Aorta (tissue), 5 donors: ENCODE measurements at regions of chr14 and their contacts with region 1.

Region 1: DNA sequence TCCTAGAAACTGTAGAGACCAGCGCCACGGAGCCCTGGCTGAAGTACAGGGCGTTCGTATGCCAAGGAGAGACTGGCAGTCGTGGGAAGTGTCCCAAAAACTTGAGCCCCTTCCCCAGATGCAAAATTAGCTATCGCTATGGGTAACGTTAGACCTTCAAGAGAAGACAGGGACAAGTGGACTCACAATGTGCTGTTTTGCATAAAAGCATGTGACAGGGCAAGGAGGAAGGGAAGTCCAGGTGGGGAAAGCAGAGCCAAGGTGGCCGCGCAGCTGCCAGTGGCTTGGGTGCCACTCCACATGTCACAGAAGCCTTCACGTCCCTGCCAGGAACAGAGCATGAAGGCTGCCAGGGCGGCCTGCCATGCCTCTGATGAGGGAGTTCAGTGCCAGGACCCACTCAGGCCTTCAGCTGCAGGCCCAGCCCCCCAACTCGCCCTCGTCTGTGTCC is 61.2 kb upstream of the DYNC1H1 start:
- DNase-seq: no peak
- ATAC-seq: no peak
- H3K4me3 ChIP-seq: no peak overlapping the region
- H3K27ac ChIP-seq: no peak overlapping the region
- H3K4me1 ChIP-seq: no peaks in the 10 kb centered on the region
- H3K27me3 ChIP-seq: no peaks in the 10 kb centered on the region

Region 2: GRCh38 chr14:101774006-101774795 is 128.9 kb before region 1 on chr14:
- intact Hi-C with region 1: loop called in 1 of 2 experiments (anchors 10 kb)
- DNase-seq: no peak
- ATAC-seq: no peak
- H3K4me3 ChIP-seq: no peak overlapping the region
- H3K27ac ChIP-seq: no peak overlapping the region
- H3K4me1 ChIP-seq: no peaks in the 10 kb centered on the region
- H3K27me3 ChIP-seq: no peaks in the 10 kb centered on the region